Sciatic nerve (tissue), 2 donors: ENCODE measurements at regions of chr4 and their contacts with region 1.

Region 1: GRCh38 chr4:22692736-22693135 is at the start of gene GBA3:
- DNase-seq: no peak
- ATAC-seq: no peak
- total RNA-seq, gene GBA3: not detected

Region 2: GRCh38 chr4:21780158-21780557 is 912.6 kb before region 1 on chr4:
- intact Hi-C with region 1: loop called (anchors 10 kb)
- DNase-seq: no peak
- ATAC-seq: no peak

Region 3: DNA sequence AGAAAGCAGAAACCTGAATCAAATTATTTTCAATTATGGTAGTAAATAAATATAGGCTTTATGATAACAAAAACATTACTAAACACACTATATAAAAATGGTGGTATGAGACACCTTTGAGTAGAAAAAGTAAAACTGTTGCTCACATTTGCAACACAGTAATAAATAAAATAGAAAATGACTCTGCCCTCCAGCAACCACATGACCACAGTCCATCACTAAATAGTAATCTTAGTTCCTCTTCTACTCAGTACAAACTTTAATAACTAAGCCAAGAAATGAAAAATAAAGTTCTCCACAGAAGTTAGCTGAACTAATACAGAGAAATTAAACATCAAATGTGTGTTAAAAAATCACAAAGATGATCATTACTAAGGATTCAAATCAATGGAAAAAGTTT is 285.4 kb before region 1 on chr4:
- intact Hi-C with region 1: loop called (anchors 10 kb)
- DNase-seq: no peak
- ATAC-seq: no peak

Region 4: DNA sequence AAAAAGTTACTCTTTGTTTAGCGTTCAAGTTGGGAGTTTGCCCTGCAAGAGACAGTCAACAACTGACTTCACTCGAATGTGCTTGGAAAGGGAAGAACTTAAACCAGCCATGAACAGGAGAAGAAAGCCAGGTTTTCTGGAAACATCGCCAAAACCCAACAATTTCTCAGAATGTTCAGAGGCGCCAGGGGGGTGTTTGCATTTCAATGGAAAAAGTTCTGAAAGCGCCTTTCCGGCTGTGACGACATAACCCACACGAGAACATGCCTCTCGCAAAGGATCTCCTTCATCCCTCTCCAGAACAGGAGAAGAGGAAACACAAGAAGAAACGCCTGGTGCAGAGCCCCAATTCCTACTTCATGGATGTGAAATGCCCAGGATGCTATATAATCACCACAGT is 98.8 kb before region 1 on chr4:
- intact Hi-C with region 1: no loop called
- DNase-seq: no peak
- ATAC-seq: no peak

Region 5: GRCh38 chr4:22634541-22635181 is 58.1 kb before region 1 on chr4:
- intact Hi-C with region 1: no loop called
- DNase-seq: no peak
- ATAC-seq: no peak

Region 6: DNA sequence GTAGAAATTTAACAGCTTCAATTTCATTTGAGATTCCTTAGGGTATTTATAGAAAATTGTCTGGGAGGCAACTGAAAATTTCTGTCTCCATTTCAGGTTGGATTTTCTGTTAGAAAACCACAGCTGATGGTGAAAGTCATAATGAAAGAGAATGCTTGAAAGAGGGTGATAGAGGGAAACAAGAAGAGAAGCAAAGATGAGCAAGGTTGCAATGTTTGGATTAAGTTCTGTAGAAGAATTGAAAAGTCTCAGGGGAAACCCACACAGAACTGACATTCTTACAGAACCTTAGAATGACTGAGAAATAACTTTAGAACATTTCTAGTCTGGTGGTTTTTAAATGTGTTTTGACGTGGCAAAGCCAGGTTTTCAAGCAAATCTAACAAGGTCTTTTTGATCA is 14.7 kb after region 1 on chr4:
- intact Hi-C with region 1: no loop called
- DNase-seq: no peak
- ATAC-seq: no peak

Region 7: GRCh38 chr4:22932326-22932725 is 239.6 kb after region 1 on chr4:
- intact Hi-C with region 1: no loop called
- DNase-seq: no peak
- ATAC-seq: no peak